Endothelial cell of umbilical vein (primary cell): ENCODE measurements at regions of chr6 and their contacts with region 1.

Region 1: GRCh38 chr6:18362058-18362561 is 25.0 kb upstream of the RNF144B start:
- DNase-seq: peak; percentile 84
- H3K4me3 ChIP-seq: no peak overlapping the region
- H3K27ac ChIP-seq: no peak overlapping the region
- H3K4me1 ChIP-seq: peaks cover 30% of the 10 kb centered on the region
- H3K27me3 ChIP-seq: no peaks in the 10 kb centered on the region
- CTCF ChIP-seq: no peak
- POLR2A ChIP-seq: no peak

Region 2: DNA sequence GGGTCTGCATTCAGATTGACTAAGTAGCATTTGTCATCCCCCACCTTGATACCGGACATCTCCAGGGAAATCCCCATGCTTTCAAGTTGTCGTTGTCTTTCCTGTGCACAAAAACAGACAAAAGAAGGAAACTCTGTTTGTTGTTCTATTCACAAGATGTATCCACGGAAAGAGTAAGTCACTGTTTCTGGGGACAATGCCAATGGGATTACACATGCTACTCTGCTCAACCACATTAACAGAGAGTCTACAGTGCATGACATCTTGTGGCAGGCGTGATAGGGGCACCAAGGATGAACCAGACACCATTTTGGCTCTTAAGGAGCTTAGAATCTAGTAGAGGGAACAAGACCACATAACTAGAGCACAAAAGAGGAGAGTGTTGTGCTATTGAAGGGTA is 531.0 kb before region 1 on chr6:
- CTCF ChIA-PET with region 1: no interaction called
- POLR2A ChIA-PET with region 1: no interaction called
- dilution Hi-C with region 1: no loop called
- intact Hi-C with region 1: no loop called
- DNase-seq: peak; percentile 98
- H3K4me3 ChIP-seq: no peak overlapping the region
- H3K27ac ChIP-seq: peak overlapping the region; percentile 96
- H3K4me1 ChIP-seq: peaks cover 23% of the 10 kb centered on the region
- H3K27me3 ChIP-seq: no peaks in the 10 kb centered on the region
- CTCF ChIP-seq: peak in 1 of 2 donors; percentile 7
- POLR2A ChIP-seq: peak; percentile 49

Region 3: GRCh38 chr6:18343741-18344140 is 18.4 kb before region 1 on chr6:
- CTCF ChIA-PET with region 1: interaction called, 4 read pairs
- POLR2A ChIA-PET with region 1: no interaction called
- dilution Hi-C with region 1: no loop called
- intact Hi-C with region 1: loop called (anchors 2 kb)
- DNase-seq: peak; percentile 91
- H3K4me3 ChIP-seq: no peak overlapping the region
- H3K27ac ChIP-seq: peak overlapping the region; percentile 69
- H3K4me1 ChIP-seq: peaks cover 16% of the 10 kb centered on the region
- H3K27me3 ChIP-seq: no peaks in the 10 kb centered on the region
- CTCF ChIP-seq: no peak
- POLR2A ChIP-seq: no peak

Region 4: DNA sequence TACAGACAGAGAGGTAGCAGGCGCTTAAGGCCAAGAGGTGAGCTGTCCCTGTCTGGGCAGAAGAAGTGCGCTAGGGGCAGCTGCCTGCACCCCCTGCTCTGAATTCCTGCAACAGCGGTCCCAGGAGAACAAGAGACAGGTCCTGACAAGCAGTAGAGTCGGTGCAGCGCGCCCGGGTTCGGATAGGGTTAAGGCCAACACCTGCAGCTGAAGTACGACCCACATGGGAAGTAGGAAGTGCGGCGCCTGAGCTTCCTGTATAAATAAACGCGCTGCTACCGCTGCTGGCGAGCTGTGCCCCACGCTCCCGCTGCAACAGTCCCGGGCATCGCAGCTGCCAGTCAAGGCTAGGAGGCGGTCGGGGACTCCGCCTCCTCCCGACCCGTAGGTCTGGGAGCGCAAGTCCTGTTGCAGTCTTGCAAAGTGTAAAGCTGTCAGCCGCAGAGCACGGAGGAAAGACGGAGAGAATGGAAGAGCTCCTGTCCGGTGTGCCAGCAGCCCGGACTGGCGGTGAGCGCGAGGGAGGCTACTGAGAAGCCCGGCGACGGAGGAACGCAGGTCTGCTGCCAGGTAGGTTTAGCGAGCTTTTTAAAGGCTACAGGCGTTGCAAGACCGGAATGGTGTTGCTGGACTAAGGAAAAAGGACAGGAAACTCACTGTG is 25.1 kb after region 1 on chr6 and contains the start of gene RNF144B:
- CTCF ChIA-PET with region 1: no interaction called
- POLR2A ChIA-PET with region 1: no interaction called
- dilution Hi-C with region 1: no loop called
- intact Hi-C with region 1: no loop called
- DNase-seq: peak; percentile 95
- H3K4me3 ChIP-seq: peak within 1 kb of the TSS; percentile 79 to 96 (median 89)
- H3K27ac ChIP-seq: peak within 1 kb of the TSS; percentile 79
- H3K4me1 ChIP-seq: peaks cover 31% of the 10 kb centered on the region
- H3K27me3 ChIP-seq: no peaks in the 10 kb centered on the region
- CTCF ChIP-seq: no peak
- POLR2A ChIP-seq: peak; percentile 92
- total RNA-seq, gene RNF144B: 78.3 and 97.3 TPM in 2 replicates